ENCODE measurements at regions of chr1 and their contacts with region 1.

Region 1: GRCh38 chr1:156480411-156481192 is 20.0 kb downstream of the MEF2D start:
- DNase-seq: peak; percentile 91
- ATAC-seq: peak; percentile 87
- H3K4me3 Mint-ChIP-seq: no peak overlapping the region
- H3K27ac Mint-ChIP-seq: peak overlapping the region; percentile 14
- H3K4me1 Mint-ChIP-seq: peaks cover 27% of the 10 kb centered on the region
- H3K27me3 Mint-ChIP-seq: no peaks in the 10 kb centered on the region
- CTCF ChIP-seq: peak; percentile 73

Region 2: DNA sequence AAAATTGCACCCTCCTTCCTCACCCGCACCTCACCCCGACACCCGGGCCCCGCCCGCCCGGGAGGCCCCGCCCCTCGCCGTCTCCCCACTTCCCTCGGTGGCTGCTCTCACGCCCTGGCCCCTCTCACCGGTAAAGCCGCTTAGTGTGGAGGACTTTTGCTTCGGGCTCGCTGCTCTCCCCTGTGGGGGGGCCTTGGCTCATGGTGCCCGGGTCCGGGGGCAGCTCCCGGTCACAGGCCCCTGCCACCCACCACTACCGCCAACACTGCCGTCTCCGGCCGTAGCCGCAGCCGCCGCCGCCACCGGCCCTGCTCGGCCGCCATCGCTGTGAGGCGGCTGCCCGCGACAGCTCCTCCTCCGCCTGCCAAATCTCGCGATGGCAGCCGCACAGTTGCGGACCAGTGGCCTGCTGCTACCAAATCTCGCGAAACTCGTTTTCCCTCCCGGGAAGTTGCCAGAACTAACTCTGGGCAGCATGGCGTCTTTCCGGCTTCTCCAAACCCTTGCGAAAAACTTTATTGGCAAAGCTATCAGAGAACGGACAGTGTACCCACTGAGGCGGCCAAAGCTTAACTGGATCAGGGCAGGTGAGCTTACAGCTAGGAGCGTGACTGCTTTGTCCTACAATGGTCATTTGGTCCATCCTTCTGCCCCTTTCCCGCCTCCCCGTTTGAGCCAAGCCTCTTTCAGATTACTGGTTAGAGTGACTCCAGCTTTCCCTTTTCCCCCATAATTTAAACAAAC is 198.0 kb before region 1 on chr1 and contains the start of gene SMG5:
- CTCF ChIA-PET with region 1: no interaction called
- POLR2A ChIA-PET with region 1: no interaction called
- DNase-seq: peak; percentile 97
- ATAC-seq: peak; percentile 94
- H3K4me3 Mint-ChIP-seq: peak within 1 kb of the TSS; percentile 97
- H3K27ac Mint-ChIP-seq: peak within 1 kb of the TSS; percentile 97
- H3K4me1 Mint-ChIP-seq: peaks cover 24% of the 10 kb centered on the region
- H3K27me3 Mint-ChIP-seq: no peaks in the 10 kb centered on the region
- CTCF ChIP-seq: no peak
- total RNA-seq, gene SMG5: 87.7 to 109 TPM (median 91.1 TPM) in 3 replicates

Region 3: GRCh38 chr1:156500797-156501499 is 20.3 kb after region 1 on chr1:
- CTCF ChIA-PET with region 1: interaction called, 142 read pairs
- POLR2A ChIA-PET with region 1: interaction called, 24 read pairs
- DNase-seq: peak; percentile 89
- ATAC-seq: peak; percentile 65
- H3K4me3 Mint-ChIP-seq: peak overlapping the region; percentile 83
- H3K27ac Mint-ChIP-seq: peak overlapping the region; percentile 36; the same call in 1 of the 2 replicates
- H3K4me1 Mint-ChIP-seq: peaks cover 70% of the 10 kb centered on the region
- H3K27me3 Mint-ChIP-seq: peaks cover 13% of the 10 kb centered on the region
- CTCF ChIP-seq: no peak

Region 4: GRCh38 chr1:156524481-156524869 is 43.9 kb after region 1 on chr1:
- CTCF ChIA-PET with region 1: interaction called, 73 read pairs
- POLR2A ChIA-PET with region 1: no interaction called
- DNase-seq: no peak
- ATAC-seq: no peak
- H3K4me3 Mint-ChIP-seq: no peak overlapping the region
- H3K27ac Mint-ChIP-seq: peak overlapping the region; percentile 39; the same call in 1 of the 2 replicates
- H3K4me1 Mint-ChIP-seq: peaks cover 23% of the 10 kb centered on the region
- H3K27me3 Mint-ChIP-seq: no peaks in the 10 kb centered on the region
- CTCF ChIP-seq: no peak

Region 5: DNA sequence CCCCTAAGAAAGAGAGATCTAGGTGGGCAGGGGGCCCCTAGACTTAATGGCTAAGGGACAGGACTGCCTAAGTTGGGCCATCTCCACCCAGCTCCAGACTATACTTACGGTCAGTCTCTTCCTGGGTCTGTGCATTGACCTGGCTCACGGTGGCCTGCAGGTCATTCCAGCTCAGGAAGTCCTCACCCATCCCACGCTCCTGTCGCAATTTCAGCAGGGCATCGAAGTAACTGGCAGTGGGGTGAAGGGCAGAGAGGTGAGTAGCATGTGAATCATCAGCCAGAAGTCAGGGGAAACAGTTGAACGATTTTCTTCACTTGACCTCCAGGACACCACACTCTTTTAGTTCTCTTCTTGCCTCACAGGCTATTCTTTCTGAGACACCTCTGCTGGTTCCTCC is 71.3 kb after region 1 on chr1:
- CTCF ChIA-PET with region 1: interaction called, 17 read pairs
- POLR2A ChIA-PET with region 1: no interaction called
- DNase-seq: no peak
- ATAC-seq: no peak
- H3K4me3 Mint-ChIP-seq: no peak overlapping the region
- H3K27ac Mint-ChIP-seq: no peak overlapping the region
- H3K4me1 Mint-ChIP-seq: no peaks in the 10 kb centered on the region
- H3K27me3 Mint-ChIP-seq: no peaks in the 10 kb centered on the region
- CTCF ChIP-seq: no peak

Region 6: GRCh38 chr1:156591432-156592157 is 111.0 kb after region 1 on chr1 and contains the start of gene NAXE:
- CTCF ChIA-PET with region 1: interaction called, 14 read pairs
- POLR2A ChIA-PET with region 1: interaction called, 3 read pairs
- DNase-seq: peak; percentile 81
- ATAC-seq: peak; percentile 91
- H3K4me3 Mint-ChIP-seq: peak within 1 kb of the TSS; percentile 79
- H3K27ac Mint-ChIP-seq: peak within 1 kb of the TSS; percentile 94
- H3K4me1 Mint-ChIP-seq: peaks cover 16% of the 10 kb centered on the region
- H3K27me3 Mint-ChIP-seq: no peaks in the 10 kb centered on the region; the same call in 1 of the 2 replicates
- CTCF ChIP-seq: no peak
- total RNA-seq, gene NAXE: 81.6 to 98.1 TPM (median 92.8 TPM) in 3 replicates

Measured in WTC11 (cell line).